ENCODE measurements at regions of chr2 and their contacts with region 1.

Region 1: DNA sequence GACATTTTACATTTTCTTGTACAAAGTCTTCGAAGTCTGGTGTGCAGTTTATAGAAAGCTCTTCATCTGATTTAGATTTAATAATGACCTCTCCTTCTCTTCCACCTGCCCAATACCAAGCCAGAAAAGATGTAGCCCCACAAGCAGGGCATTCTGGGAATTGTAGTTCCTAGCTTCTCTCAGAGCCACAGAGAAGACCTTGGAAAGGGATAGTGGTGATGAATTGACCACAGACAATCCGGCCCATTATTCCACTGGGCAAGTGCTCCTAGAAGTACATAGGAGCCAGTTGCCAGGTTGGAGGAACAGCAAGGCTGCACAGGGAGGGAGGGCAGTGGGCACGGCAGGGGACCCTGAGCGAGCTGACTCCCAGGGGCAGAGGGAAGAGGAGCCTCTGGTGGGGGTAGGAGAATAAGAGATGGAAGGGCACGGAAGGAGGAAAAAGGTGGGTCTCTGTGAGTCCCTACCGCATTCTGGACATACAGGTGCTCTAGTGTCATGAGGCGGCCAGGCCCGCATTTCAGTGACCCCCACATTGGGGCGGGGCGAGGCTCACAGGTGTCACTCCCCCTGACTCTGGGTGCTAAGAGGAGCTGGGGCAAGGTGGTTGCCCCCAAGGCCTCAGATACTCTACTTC is 152.5 kb upstream of the HAAO start:
- DNase-seq: peak; percentile 59
- H3K4me3 ChIP-seq: no peak overlapping the region
- H3K27ac ChIP-seq: no peak overlapping the region
- H3K4me1 ChIP-seq: peaks cover 5% of the 10 kb centered on the region
- H3K27me3 ChIP-seq: no peaks in the 10 kb centered on the region
- CTCF ChIP-seq: no peak

Region 2: DNA sequence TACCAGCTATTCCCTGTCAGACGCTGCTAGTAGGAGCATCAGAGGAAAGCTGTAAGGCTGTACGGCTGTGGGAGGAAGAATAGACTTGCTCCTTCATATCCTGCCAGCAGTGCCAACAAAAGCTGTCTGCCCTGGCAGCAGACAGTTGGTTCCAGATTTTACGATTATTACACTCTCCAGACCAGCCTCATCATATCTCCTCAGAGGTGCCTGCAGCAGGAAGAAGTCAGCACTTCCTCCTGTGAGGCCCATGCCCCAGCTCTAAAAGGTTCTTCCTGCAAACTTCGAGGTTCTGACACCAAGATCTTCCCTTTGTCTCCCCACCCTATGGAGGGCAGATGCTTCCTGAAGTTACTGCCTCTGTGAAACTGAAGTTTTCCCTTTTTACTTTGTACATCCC is 1434.8 kb before region 1 on chr2:
- CTCF ChIA-PET with region 1: no interaction called
- dilution Hi-C with region 1: no loop called
- in situ Hi-C with region 1: no loop called
- intact Hi-C with region 1: no loop called
- DNase-seq: no peak
- H3K4me3 ChIP-seq: no peak overlapping the region
- H3K27ac ChIP-seq: no peak overlapping the region
- H3K4me1 ChIP-seq: no peaks in the 10 kb centered on the region
- H3K27me3 ChIP-seq: no peaks in the 10 kb centered on the region
- CTCF ChIP-seq: no peak

Region 3: GRCh38 chr2:42844901-42845821 is 99.7 kb before region 1 on chr2:
- CTCF ChIA-PET with region 1: no interaction called
- dilution Hi-C with region 1: no loop called
- in situ Hi-C with region 1: no loop called
- intact Hi-C with region 1: no loop called
- DNase-seq: no peak
- H3K4me3 ChIP-seq: no peak overlapping the region
- H3K27ac ChIP-seq: no peak overlapping the region
- H3K4me1 ChIP-seq: no peaks in the 10 kb centered on the region
- H3K27me3 ChIP-seq: no peaks in the 10 kb centered on the region
- CTCF ChIP-seq: no peak

Region 4: DNA sequence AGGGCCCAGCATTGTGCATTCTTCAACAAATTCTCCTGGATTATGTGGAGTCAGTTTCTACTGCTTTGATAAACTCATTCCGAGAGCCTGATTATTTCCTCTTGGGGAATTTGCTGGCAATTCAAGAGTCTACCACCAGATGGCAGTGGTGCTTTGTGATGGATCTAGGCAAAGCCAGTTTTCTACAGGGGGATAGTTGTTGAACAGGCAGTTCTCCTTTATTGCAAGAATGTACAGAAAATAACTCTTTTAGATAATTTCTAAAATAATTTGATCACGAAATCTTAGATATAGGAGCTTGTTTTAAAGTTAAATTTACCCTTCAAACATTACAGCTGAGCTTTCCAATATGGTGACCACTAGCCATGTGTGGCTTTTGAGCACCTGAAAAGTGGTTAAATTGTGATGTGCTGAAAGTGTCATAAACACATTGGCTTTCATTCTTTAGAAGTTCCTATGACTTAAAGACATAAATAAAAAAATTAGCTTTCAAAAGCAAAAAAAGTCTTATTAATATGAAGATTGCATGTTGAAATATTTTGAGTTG is 85.8 kb before region 1 on chr2:
- CTCF ChIA-PET with region 1: no interaction called
- dilution Hi-C with region 1: loop called (anchors 5 kb)
- in situ Hi-C with region 1: no loop called
- intact Hi-C with region 1: loop called (anchors 1 kb)
- DNase-seq: peak; percentile 63
- H3K4me3 ChIP-seq: no peak overlapping the region
- H3K27ac ChIP-seq: no peak overlapping the region
- H3K4me1 ChIP-seq: peaks cover 35% of the 10 kb centered on the region
- H3K27me3 ChIP-seq: no peaks in the 10 kb centered on the region
- CTCF ChIP-seq: peak; percentile 93 to 95

Region 5: DNA sequence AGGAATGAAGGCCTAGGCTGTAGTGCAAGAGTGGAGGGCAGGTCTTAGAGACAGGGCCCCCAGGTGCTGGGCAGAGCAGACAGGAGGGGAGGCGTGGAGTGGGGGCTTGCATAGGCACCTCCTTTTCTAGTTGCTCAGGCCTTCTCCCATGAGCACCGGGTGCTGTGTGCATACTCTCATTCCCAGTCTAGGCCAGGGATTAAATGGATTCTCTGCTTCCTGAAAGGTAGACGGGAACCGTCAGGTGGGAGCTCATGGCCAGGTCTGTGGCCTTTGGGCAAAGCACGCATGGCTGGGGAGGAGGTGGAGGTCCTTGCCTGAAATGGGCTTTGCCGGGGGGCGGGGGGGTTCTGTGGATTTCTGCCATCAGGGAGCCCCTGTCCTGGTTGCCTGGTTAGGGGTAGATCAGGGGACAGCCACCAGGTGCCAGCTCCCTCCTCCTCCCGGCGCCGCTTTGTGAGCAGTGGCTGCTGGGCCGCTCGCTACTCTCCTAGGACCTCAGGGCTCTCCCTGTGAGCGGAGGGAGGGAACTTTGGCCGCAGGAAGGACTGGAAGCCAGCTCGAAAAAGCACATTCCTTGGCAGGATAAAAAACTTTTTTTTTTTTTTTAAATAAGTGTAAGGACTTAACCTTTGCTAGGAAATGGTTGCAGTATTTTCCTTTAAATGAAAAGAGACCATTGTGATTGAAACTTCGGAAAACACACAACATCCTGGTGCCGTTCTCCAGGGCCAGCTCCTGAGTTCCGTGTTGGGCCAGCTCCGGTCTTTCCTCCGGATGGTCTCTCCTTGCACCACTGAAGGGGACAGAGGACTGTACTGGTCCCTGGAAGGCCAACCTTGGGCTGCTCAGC is 69.7 kb before region 1 on chr2:
- CTCF ChIA-PET with region 1: no interaction called
- dilution Hi-C with region 1: no loop called
- in situ Hi-C with region 1: no loop called
- intact Hi-C with region 1: no loop called
- DNase-seq: no peak
- H3K4me3 ChIP-seq: no peak overlapping the region
- H3K27ac ChIP-seq: no peak overlapping the region
- H3K4me1 ChIP-seq: peaks cover 19% of the 10 kb centered on the region
- H3K27me3 ChIP-seq: no peaks in the 10 kb centered on the region
- CTCF ChIP-seq: no peak

Region 6: DNA sequence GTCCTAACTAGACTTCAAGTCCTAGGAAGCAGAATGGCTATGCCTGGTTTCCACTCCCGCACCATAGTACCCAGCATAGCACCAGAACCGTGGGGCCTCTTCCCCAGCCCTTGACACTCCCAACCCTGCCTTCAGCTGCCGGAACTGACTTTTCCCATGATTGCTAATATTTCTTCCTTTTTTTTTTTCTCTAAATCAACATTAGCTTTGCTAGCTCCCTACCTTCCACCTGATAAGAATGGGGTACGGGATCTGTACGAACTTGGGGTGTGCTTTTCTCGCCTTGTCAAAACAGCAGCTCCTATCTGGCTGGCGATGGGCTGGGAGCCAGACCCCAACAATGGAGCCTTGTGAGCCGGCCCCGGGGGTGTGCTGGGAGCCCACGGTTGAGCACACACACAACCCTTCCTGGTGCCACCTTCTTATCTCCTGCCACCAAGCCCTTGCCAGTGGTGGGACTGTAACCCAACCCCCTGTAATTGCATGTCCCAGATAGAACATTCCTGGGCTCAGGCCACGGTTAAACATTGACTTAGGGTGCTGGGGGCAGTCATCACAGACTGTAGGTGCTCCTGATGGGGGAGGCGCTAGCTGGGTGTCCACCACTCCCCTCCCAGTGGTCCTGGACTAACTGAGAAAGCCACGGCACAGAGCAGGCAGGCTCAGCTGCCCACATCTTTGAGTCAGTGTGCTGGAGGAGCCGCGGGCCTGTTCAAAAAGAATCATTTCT is 60.5 kb after region 1 on chr2:
- CTCF ChIA-PET with region 1: no interaction called
- dilution Hi-C with region 1: loop called (anchors 5 kb)
- in situ Hi-C with region 1: no loop called
- intact Hi-C with region 1: no loop called
- DNase-seq: no peak
- H3K4me3 ChIP-seq: no peak overlapping the region
- H3K27ac ChIP-seq: no peak overlapping the region
- H3K4me1 ChIP-seq: peaks cover 4% of the 10 kb centered on the region
- H3K27me3 ChIP-seq: no peaks in the 10 kb centered on the region
- CTCF ChIP-seq: no peak

Region 7: DNA sequence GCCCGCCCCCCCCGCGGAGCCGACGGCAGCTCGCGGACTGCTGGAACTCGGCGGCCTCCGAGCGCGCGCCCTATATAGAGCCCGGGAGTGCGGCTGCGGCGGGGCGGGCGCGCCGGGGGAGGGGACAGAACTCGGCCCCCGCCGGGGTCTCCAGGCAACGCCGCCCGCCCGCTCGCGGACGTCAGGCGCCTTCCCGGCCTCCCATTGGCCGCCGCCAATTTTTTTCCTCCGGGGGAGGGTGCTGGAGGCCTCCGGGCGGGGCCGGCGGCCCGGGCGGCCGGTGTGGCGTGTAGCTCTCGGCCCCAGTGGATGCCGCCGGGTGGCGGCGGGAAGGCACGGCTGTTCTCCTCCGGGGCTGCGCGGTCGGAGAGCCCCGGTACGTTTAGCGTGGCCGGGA is 281.7 kb after region 1 on chr2 and contains the start of gene ZFP36L2:
- CTCF ChIA-PET with region 1: interaction called, 3 read pairs
- dilution Hi-C with region 1: loop called (anchors 5 kb)
- in situ Hi-C with region 1: loop called in 1 of 2 experiments (anchors 10 kb)
- intact Hi-C with region 1: loop called (anchors 1 kb)
- DNase-seq: peak; percentile 95
- H3K4me3 ChIP-seq: peak within 1 kb of the TSS; percentile 83 to 88 (median 86)
- H3K27ac ChIP-seq: peak within 1 kb of the TSS; percentile 88
- H3K4me1 ChIP-seq: peaks cover 29% of the 10 kb centered on the region
- H3K27me3 ChIP-seq: no peaks in the 10 kb centered on the region
- CTCF ChIP-seq: no peak
- total RNA-seq, gene ZFP36L2: 26.3 to 213 TPM

Region 8: GRCh38 chr2:43484323-43484930 is 539.5 kb after region 1 on chr2:
- CTCF ChIA-PET with region 1: interaction called, 3 read pairs
- dilution Hi-C with region 1: no loop called
- in situ Hi-C with region 1: loop called in 1 of 2 experiments (anchors 10 kb)
- intact Hi-C with region 1: loop called (anchors 1 kb)
- DNase-seq: peak; percentile 50
- H3K4me3 ChIP-seq: no peak overlapping the region
- H3K27ac ChIP-seq: no peak overlapping the region
- H3K4me1 ChIP-seq: peaks cover 9% of the 10 kb centered on the region
- H3K27me3 ChIP-seq: no peaks in the 10 kb centered on the region
- CTCF ChIP-seq: peak; percentile 45 to 51

Region 9: GRCh38 chr2:43611987-43612894 is 667.3 kb after region 1 on chr2:
- CTCF ChIA-PET with region 1: no interaction called
- dilution Hi-C with region 1: no loop called
- in situ Hi-C with region 1: no loop called
- intact Hi-C with region 1: loop called (anchors 2 kb)
- DNase-seq: peak; percentile 58
- H3K4me3 ChIP-seq: no peak overlapping the region
- H3K27ac ChIP-seq: no peak overlapping the region
- H3K4me1 ChIP-seq: no peaks in the 10 kb centered on the region
- H3K27me3 ChIP-seq: no peaks in the 10 kb centered on the region
- CTCF ChIP-seq: peak; percentile 77 to 87